Left lung (tissue), 14 donors: ENCODE measurements at regions of chr3 and their contacts with region 1.

Region 1: DNA sequence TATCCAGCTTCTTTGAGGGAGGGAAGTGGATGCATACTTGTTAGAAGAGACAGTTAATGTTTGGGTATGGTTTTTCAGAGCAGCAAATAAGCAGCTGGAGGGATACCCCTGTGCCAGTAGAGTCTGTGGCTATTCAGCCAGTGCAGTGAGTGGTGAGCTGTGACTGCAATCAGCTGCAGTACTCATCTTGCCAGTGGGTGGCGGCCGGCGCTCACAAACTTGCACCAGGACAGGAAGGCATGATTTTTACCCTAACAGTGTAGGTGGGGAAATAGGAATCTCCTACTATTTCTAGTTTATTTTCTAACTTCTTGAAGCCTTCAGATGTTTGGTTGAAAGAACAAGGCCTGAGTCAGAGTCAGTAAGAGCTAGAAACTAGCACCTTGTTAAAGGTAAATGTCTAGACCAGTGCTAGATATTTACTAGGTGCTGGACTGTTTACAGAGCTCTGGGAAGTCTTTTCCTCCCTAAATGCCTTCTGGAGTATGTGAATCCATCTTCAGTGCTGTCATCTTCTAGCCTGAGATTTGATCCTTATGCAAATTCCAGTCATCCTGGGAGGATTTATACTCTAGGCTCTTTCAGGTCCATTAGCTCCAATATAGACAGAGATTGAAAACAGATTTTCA is 23.6 kb downstream of the TIMP4 start:
- DNase-seq: peak in 3 of 4 donors; percentile 71 to 95 (median 72)
- ATAC-seq: peak; percentile 97
- H3K4me3 ChIP-seq: no peak overlapping the region
- H3K27ac ChIP-seq: no peak overlapping the region
- H3K4me1 ChIP-seq: peaks cover 0 to 16% of the 10 kb centered on the region in 2 donors
- H3K27me3 ChIP-seq: peaks cover 0 to 5% of the 10 kb centered on the region in 2 donors
- CTCF ChIP-seq: peak; percentile 87 to 91

Region 2: GRCh38 chr3:12479919-12480425 is 344.8 kb after region 1 on chr3:
- intact Hi-C with region 1: loop called in 1 of 2 experiments (anchors 5 kb)
- DNase-seq: peak in 2 of 4 donors; percentile 34 to 56
- ATAC-seq: peak; percentile 47
- H3K4me3 ChIP-seq: no peak overlapping the region
- H3K27ac ChIP-seq: no peak overlapping the region
- H3K4me1 ChIP-seq: peaks cover 5 to 29% of the 10 kb centered on the region in 2 donors
- H3K27me3 ChIP-seq: no peaks in the 10 kb centered on the region
- CTCF ChIP-seq: peak; percentile 64 to 77